Naive thymus-derived CD4-positive, alpha-beta T cell (primary cell): ENCODE measurements at regions of chr2 and their contacts with region 1.

Region 1: GRCh38 chr2:157468931-157469708 is 25.2 kb upstream of the CYTIP start:
- DNase-seq: peak in 7 of 9 donors; percentile 56 to 83 (median 74)
- ATAC-seq: peak; percentile 90
- H3K4me3 ChIP-seq: no peak overlapping the region
- H3K4me3 Mint-ChIP-seq: peak overlapping the region; percentile 42 to 85 (median 71)
- H3K27ac ChIP-seq: peak overlapping the region; percentile 77
- H3K27ac Mint-ChIP-seq: peak overlapping the region; percentile 88 to 99 (median 97)
- H3K4me1 ChIP-seq: peaks cover 22 to 36% of the 10 kb centered on the region in 2 donors
- H3K4me1 Mint-ChIP-seq: peaks cover 41 to 90% (median 77%) of the 10 kb centered on the region in 7 donors
- H3K27me3 ChIP-seq: no peaks in the 10 kb centered on the region
- H3K27me3 Mint-ChIP-seq: no peaks in the 10 kb centered on the region

Region 2: GRCh38 chr2:157404363-157404762 is 64.8 kb before region 1 on chr2:
- CTCF ChIA-PET with region 1: no interaction called
- POLR2A ChIA-PET with region 1: interaction called, 10 read pairs
- intact Hi-C with region 1: loop called in 1 of 2 experiments (anchors 1 kb)
- DNase-seq: peak in 8 of 9 donors; percentile 44 to 92 (median 88)
- ATAC-seq: peak; percentile 98
- H3K4me3 ChIP-seq: peak overlapping the region; percentile 7
- H3K4me3 Mint-ChIP-seq: peak overlapping the region; percentile 8 to 83 (median 74)
- H3K27ac ChIP-seq: peak overlapping the region; percentile 75
- H3K27ac Mint-ChIP-seq: peak overlapping the region; percentile 91 to 100 (median 99)
- H3K4me1 ChIP-seq: peaks cover 33 to 55% of the 10 kb centered on the region in 2 donors
- H3K4me1 Mint-ChIP-seq: peaks cover 31 to 82% (median 77%) of the 10 kb centered on the region in 7 donors
- H3K27me3 ChIP-seq: no peaks in the 10 kb centered on the region
- H3K27me3 Mint-ChIP-seq: no peaks in the 10 kb centered on the region

Region 3: GRCh38 chr2:157413326-157414035 is 55.6 kb before region 1 on chr2:
- CTCF ChIA-PET with region 1: interaction called, 3 read pairs
- POLR2A ChIA-PET with region 1: interaction called, 4 read pairs
- intact Hi-C with region 1: loop called (anchors 1 kb)
- DNase-seq: peak in 7 of 9 donors; percentile 71 to 94 (median 88)
- ATAC-seq: peak; percentile 86
- H3K4me3 ChIP-seq: peak overlapping the region; percentile 22
- H3K4me3 Mint-ChIP-seq: peak overlapping the region; percentile 45 to 85 (median 68)
- H3K27ac ChIP-seq: peak overlapping the region; percentile 86
- H3K27ac Mint-ChIP-seq: peak overlapping the region; percentile 92 to 98 (median 95)
- H3K4me1 ChIP-seq: peaks cover 84 to 89% of the 10 kb centered on the region in 2 donors
- H3K4me1 Mint-ChIP-seq: peaks cover 58 to 97% (median 93%) of the 10 kb centered on the region in 7 donors
- H3K27me3 ChIP-seq: no peaks in the 10 kb centered on the region
- H3K27me3 Mint-ChIP-seq: no peaks in the 10 kb centered on the region

Region 4: GRCh38 chr2:157420771-157421323 is 48.3 kb before region 1 on chr2:
- CTCF ChIA-PET with region 1: interaction called, 4 read pairs
- POLR2A ChIA-PET with region 1: interaction called, 4 read pairs
- intact Hi-C with region 1: loop called (anchors 1 kb)
- DNase-seq: no peak
- ATAC-seq: peak; percentile 74
- H3K4me3 ChIP-seq: no peak overlapping the region
- H3K4me3 Mint-ChIP-seq: peak overlapping the region in 9 of 10 donors; percentile 30 to 75 (median 66)
- H3K27ac ChIP-seq: peak overlapping the region; percentile 86
- H3K27ac Mint-ChIP-seq: peak overlapping the region; percentile 90 to 98 (median 94)
- H3K4me1 ChIP-seq: peaks cover 59% of the 10 kb centered on the region in 2 donors
- H3K4me1 Mint-ChIP-seq: peaks cover 49 to 91% (median 80%) of the 10 kb centered on the region in 7 donors
- H3K27me3 ChIP-seq: no peaks in the 10 kb centered on the region
- H3K27me3 Mint-ChIP-seq: no peaks in the 10 kb centered on the region

Region 5: GRCh38 chr2:157480182-157480961 is 11.3 kb after region 1 on chr2:
- CTCF ChIA-PET with region 1: interaction called, 4 read pairs
- POLR2A ChIA-PET with region 1: interaction called, 8 read pairs
- intact Hi-C with region 1: loop called (anchors 1 kb)
- DNase-seq: peak in 1 of 9 donors; percentile 62
- ATAC-seq: peak; percentile 46
- H3K4me3 ChIP-seq: no peak overlapping the region
- H3K4me3 Mint-ChIP-seq: peak overlapping the region; percentile 11 to 86 (median 50)
- H3K27ac ChIP-seq: no peak overlapping the region
- H3K27ac Mint-ChIP-seq: peak overlapping the region in 7 of 9 donors; percentile 21 to 95 (median 84)
- H3K4me1 ChIP-seq: peaks cover 0 to 25% of the 10 kb centered on the region in 2 donors
- H3K4me1 Mint-ChIP-seq: peaks cover 22 to 81% (median 53%) of the 10 kb centered on the region in 7 donors
- H3K27me3 ChIP-seq: no peaks in the 10 kb centered on the region
- H3K27me3 Mint-ChIP-seq: no peaks in the 10 kb centered on the region

Region 6: DNA sequence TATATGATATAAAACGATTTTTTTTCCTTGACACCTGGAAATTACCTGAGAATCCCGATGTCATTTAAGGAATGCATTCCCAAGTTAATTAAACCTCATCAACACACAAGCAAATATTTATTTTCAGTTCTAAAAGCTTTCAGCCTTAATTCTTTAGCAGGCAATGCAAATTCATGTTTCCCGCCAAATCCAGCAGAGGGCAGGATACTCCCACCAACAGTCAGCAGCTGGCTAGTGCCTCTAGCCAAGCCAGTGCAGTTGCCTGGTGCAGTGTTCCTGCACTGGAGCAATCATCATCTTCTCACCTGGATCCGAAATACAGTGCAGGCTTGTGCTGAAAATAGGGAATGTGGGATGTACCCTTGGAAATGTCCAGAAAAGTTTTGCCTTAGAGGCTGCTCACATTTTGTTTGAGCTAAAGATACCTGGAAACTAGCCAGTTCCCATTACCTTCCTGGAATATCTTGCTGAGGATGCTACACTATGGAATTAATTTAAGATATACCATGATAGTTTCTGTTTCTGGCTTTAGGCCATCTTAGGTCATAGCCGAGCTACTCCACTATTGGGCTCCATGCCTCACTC is 23.2 kb after region 1 on chr2:
- CTCF ChIA-PET with region 1: interaction called, 5 read pairs
- POLR2A ChIA-PET with region 1: interaction called, 5 read pairs
- intact Hi-C with region 1: loop called in 1 of 2 experiments (anchors 1 kb)
- DNase-seq: peak; percentile 41 to 79 (median 68)
- ATAC-seq: peak; percentile 91
- H3K4me3 ChIP-seq: no peak overlapping the region
- H3K4me3 Mint-ChIP-seq: peak overlapping the region in 6 of 10 donors; percentile 1 to 39 (median 14)
- H3K27ac ChIP-seq: no peak overlapping the region
- H3K27ac Mint-ChIP-seq: peak overlapping the region in 3 of 9 donors; percentile 9 to 19 (median 13)
- H3K4me1 ChIP-seq: peaks cover 0 to 21% of the 10 kb centered on the region in 2 donors
- H3K4me1 Mint-ChIP-seq: peaks cover 10 to 67% (median 59%) of the 10 kb centered on the region in 7 donors
- H3K27me3 ChIP-seq: no peaks in the 10 kb centered on the region
- H3K27me3 Mint-ChIP-seq: no peaks in the 10 kb centered on the region